ENCODE measurements at regions of chr6 and their contacts with region 1.

Region 1: DNA sequence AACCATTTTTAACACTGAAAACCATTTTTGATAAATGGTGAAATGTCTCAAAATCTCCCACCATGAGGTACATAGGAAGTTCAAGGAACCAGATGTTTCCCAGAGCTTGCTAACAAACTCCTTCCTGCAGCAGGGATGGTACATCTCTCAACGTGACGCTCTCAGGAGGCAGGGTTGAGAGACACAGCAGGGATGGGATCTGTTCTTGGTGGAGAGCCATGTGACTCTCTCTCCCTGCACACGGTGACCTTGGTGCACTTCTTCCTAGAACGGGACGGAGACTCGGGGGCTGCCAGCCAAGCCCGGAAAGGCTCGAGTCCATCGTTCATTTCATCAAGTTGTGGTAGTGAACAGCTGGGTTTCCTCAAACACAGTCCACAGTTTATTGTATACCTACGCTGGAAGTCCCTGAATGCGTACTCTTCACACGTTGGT is 94.2 kb downstream of the FAM50B start:
- DNase-seq: no peak
- ATAC-seq: no peak
- H3K4me3 ChIP-seq: no peak overlapping the region
- H3K4me3 Mint-ChIP-seq: no peak overlapping the region
- H3K27ac ChIP-seq: no peak overlapping the region
- H3K27ac Mint-ChIP-seq: no peak overlapping the region
- H3K4me1 ChIP-seq: no peaks in the 10 kb centered on the region
- H3K4me1 Mint-ChIP-seq: no peaks in the 10 kb centered on the region
- H3K27me3 ChIP-seq: peaks cover 0 to 9% (median 0%) of the 10 kb centered on the region in 4 experiments
- H3K27me3 Mint-ChIP-seq: peaks cover 41% of the 10 kb centered on the region
- CTCF ChIP-seq: no peak

Region 2: DNA sequence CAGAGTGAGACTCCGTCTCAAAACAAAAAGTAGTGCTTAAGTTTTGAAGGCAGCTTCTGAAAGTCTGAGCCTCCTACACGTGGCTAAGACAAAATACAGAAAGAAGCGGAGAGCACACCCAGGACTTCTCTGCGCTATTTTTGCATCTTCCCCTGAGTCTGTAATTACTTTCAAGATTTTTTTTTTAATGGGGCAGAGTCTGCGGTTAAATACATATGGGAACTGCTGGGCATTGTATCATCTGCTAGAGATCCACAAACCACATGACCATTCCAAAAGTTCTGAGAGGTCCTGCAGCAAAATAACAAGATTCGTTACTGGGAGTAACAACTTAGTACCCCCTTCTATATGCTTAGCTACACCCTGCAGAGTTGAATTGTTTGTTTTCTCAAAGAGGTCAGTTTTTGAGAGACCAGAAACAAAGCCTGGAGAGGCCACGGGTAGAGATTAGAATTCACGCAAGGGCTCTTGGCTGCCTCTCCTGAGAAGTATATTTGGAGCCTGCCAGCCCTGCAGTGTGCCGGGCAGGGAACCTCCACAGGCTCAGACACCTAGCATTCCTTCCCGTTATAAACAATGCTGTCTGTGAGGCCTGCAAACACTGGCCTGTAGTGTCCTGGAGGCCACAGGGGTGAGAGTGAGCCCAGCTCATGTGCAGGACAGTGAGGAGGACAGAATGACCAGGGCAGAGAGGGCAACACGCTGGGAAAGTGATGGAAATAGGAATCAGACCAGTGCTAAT is 142.3 kb before region 1 on chr6:
- CTCF ChIA-PET with region 1: no interaction called
- POLR2A ChIA-PET with region 1: no interaction called
- intact Hi-C with region 1: no loop called
- DNase-seq: no peak
- ATAC-seq: no peak
- H3K4me3 ChIP-seq: no peak overlapping the region
- H3K4me3 Mint-ChIP-seq: no peak overlapping the region
- H3K27ac ChIP-seq: no peak overlapping the region
- H3K27ac Mint-ChIP-seq: no peak overlapping the region
- H3K4me1 ChIP-seq: peaks cover 16 to 22% of the 10 kb centered on the region in 2 donors
- H3K4me1 Mint-ChIP-seq: peaks cover 46% of the 10 kb centered on the region
- H3K27me3 ChIP-seq: no peaks in the 10 kb centered on the region
- H3K27me3 Mint-ChIP-seq: no peaks in the 10 kb centered on the region
- CTCF ChIP-seq: no peak

Region 3: GRCh38 chr6:3888119-3888957 is 55.0 kb before region 1 on chr6:
- CTCF ChIA-PET with region 1: no interaction called
- POLR2A ChIA-PET with region 1: no interaction called
- intact Hi-C with region 1: no loop called
- DNase-seq: no peak
- ATAC-seq: no peak
- H3K4me3 ChIP-seq: no peak overlapping the region
- H3K4me3 Mint-ChIP-seq: no peak overlapping the region
- H3K27ac ChIP-seq: no peak overlapping the region
- H3K27ac Mint-ChIP-seq: no peak overlapping the region
- H3K4me1 ChIP-seq: no peaks in the 10 kb centered on the region
- H3K4me1 Mint-ChIP-seq: no peaks in the 10 kb centered on the region
- H3K27me3 ChIP-seq: no peaks in the 10 kb centered on the region
- H3K27me3 Mint-ChIP-seq: peaks cover 3% of the 10 kb centered on the region
- CTCF ChIP-seq: no peak

Region 4: GRCh38 chr6:3902871-3903648 is 40.3 kb before region 1 on chr6:
- CTCF ChIA-PET with region 1: no interaction called
- POLR2A ChIA-PET with region 1: interaction called, 12 read pairs
- intact Hi-C with region 1: no loop called
- DNase-seq: no peak
- ATAC-seq: no peak
- H3K4me3 ChIP-seq: no peak overlapping the region
- H3K4me3 Mint-ChIP-seq: no peak overlapping the region
- H3K27ac ChIP-seq: no peak overlapping the region
- H3K27ac Mint-ChIP-seq: no peak overlapping the region
- H3K4me1 ChIP-seq: no peaks in the 10 kb centered on the region
- H3K4me1 Mint-ChIP-seq: no peaks in the 10 kb centered on the region
- H3K27me3 ChIP-seq: peaks cover 0 to 8% (median 0%) of the 10 kb centered on the region in 4 experiments
- H3K27me3 Mint-ChIP-seq: peaks cover 31% of the 10 kb centered on the region
- CTCF ChIP-seq: no peak

Region 5: DNA sequence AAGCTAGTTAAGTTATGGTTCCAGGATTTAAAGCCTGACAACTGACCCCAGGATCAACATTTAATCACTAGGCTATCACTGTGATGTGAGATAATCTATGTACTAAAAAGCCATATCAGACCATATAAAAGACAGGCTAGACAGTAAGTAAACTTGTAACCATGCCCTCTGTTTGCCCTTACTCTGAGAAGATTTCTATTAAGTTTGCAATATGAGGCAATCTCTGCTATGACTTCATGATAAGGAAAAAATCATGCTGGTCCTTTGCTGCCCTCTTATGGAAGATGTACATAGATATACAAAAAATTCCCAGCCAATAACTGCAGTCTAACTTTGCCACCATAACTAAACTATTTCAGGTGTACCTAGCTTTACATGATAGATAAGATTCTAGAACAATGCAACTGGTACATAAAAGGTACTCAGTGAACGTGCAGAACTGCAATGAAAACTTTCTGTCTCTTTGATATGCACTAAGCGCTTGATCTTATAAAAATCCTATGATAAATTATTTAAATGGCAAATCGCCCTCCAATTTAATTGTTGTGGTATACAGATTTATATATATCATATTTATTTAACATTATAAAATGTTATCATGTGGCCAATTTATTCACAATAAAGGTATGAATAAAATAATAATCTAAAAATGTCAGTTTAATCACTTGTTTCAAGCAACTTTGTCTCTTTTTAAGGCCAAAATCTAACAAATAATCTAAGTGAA is 65.1 kb after region 1 on chr6:
- CTCF ChIA-PET with region 1: no interaction called
- POLR2A ChIA-PET with region 1: no interaction called
- intact Hi-C with region 1: loop called (anchors 10 kb)
- DNase-seq: peak; percentile 67
- ATAC-seq: peak; percentile 58
- H3K4me3 ChIP-seq: no peak overlapping the region
- H3K4me3 Mint-ChIP-seq: no peak overlapping the region
- H3K27ac ChIP-seq: no peak overlapping the region
- H3K27ac Mint-ChIP-seq: no peak overlapping the region
- H3K4me1 ChIP-seq: peaks cover 5 to 6% of the 10 kb centered on the region in 2 donors
- H3K4me1 Mint-ChIP-seq: peaks cover 30% of the 10 kb centered on the region
- H3K27me3 ChIP-seq: no peaks in the 10 kb centered on the region
- H3K27me3 Mint-ChIP-seq: no peaks in the 10 kb centered on the region
- CTCF ChIP-seq: peak; percentile 72

Region 6: DNA sequence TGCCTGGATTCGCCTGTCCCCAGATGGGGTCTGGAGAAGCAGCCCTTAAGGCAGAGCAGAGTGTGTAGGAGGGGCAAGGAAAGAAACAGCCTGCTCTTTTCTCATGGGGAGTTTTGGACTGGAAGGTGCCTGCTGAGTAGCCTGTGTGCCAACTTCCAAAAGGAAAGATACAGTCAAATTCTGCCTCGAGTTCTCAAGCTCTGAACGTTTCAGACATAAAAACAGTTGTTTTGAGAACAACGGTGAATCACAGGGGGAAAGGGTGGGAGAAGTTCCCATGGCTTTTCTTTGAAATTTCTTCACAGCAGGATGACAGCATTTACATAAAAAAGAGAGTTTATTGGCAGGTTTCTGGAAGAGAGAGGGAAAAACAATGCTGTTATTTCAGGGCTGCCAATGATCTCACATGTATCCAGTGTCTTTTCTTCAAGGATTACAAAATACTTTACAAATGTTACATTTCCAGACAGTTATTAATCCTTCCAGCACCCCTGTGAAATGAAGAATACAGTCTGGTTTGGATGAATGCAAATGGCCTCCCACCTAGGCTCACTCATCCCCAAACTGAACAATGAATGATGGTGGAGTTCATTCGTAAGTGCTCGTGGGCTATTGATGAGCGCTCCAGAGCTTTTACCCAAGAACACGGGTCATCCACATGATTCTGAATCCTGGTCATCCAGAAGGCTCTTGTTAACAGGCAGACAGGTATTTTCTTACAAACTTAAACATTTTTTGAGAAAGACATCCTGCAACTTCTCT is 225.9 kb after region 1 on chr6:
- CTCF ChIA-PET with region 1: no interaction called
- POLR2A ChIA-PET with region 1: no interaction called
- intact Hi-C with region 1: no loop called
- DNase-seq: no peak
- ATAC-seq: no peak
- H3K4me3 ChIP-seq: no peak overlapping the region
- H3K4me3 Mint-ChIP-seq: no peak overlapping the region
- H3K27ac ChIP-seq: no peak overlapping the region
- H3K27ac Mint-ChIP-seq: no peak overlapping the region
- H3K4me1 ChIP-seq: no peaks in the 10 kb centered on the region
- H3K4me1 Mint-ChIP-seq: peaks cover 2% of the 10 kb centered on the region
- H3K27me3 ChIP-seq: no peaks in the 10 kb centered on the region
- H3K27me3 Mint-ChIP-seq: no peaks in the 10 kb centered on the region
- CTCF ChIP-seq: no peak

Measured in B cell (primary cell).